Endothelial cell of umbilical vein (primary cell): ENCODE measurements at regions of chr4 and their contacts with region 1.

Region 1: DNA sequence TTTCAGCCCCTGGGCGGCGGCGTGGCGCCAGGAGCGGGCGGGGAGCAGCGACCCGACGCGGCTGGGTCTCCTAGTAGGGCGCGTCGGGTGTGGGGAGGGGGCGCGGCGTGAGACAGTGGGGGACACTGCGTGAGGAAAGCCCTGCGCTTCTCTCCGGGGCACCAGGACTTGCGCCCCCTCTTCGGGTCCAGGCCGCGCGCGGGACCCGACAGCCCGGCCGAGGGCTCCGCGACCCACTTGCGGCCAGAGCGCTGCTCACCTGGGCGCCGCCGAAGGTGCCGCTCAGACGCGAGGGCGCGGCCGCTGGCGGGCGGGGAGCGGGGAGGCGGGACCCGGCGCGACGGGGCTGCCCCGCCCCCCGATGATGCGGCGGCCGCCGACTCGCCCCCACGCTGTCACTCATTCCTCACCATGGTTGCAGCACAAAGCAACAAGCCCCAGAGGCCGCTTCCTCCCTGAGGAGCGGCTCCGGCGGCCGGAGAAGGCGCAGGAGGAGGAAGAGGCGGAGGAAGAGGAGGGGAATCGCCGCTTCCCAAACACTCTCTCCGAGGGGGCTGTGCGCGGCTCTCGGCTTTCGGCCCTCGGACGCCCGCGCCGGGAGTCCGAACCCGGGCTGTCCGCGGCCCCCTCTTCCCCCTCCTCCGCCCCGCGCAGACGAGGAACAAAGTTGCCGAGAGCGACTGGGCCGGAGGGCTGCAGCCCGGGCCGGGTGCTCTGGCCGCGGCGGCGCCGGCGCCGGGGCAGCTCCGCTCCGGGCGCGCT is at the start of gene RAPGEF2:
- DNase-seq: peak; percentile 93
- H3K4me3 ChIP-seq: peak within 1 kb of the TSS; percentile 62 to 97 (median 95)
- H3K27ac ChIP-seq: peak within 1 kb of the TSS; percentile 96
- H3K4me1 ChIP-seq: peaks cover 29% of the 10 kb centered on the region
- H3K27me3 ChIP-seq: no peaks in the 10 kb centered on the region
- CTCF ChIP-seq: no peak
- POLR2A ChIP-seq: peak; percentile 59
- total RNA-seq, gene RAPGEF2: 55.2 and 61.6 TPM in 2 replicates

Region 2: DNA sequence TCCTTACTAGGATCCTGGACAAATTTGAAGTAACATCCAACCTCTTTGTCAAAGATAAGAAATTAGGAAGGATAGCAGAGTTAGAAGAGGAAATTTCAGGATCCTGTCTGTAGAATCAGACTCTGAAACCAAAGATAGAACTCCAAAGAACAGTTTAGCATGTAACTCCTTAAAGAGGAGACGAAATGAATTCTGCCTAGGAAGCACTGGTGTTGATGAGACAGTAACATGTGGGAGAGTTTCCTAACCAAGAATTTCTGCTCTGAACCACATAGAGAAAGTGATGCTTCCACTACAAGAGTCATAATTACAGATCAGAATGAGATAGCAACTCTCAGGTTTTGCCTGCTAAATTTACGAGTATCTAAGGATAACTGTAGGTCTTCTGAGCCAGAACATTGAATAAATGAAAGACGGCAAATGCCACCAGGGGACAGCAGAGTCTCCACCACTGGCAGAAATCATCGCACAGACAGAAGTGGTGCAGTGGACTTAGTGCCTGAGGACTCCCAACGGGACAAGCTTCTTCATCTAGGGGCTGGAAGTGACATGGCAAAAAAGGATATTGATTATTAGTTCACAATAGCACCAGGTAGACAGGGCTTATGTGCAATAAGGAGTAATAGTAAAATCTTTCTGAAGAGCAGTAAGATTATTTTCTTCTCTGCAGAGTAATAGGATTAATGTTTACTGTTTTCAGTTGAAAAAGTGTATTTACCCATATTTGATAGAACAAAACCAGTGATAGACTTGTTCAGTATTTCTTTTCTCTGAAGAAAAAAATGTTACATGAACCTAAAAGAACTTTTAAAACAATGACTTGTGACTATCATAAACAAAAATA is 372.9 kb before region 1 on chr4:
- CTCF ChIA-PET with region 1: no interaction called
- POLR2A ChIA-PET with region 1: interaction called, 7 read pairs
- dilution Hi-C with region 1: no loop called
- intact Hi-C with region 1: loop called (anchors 2 kb)
- DNase-seq: peak; percentile 84
- H3K4me3 ChIP-seq: no peak overlapping the region
- H3K27ac ChIP-seq: no peak overlapping the region
- H3K4me1 ChIP-seq: no peaks in the 10 kb centered on the region
- H3K27me3 ChIP-seq: peaks cover 9 to 14% of the 10 kb centered on the region in 2 experiments
- CTCF ChIP-seq: peak; percentile 71 to 78
- POLR2A ChIP-seq: no peak

Region 3: DNA sequence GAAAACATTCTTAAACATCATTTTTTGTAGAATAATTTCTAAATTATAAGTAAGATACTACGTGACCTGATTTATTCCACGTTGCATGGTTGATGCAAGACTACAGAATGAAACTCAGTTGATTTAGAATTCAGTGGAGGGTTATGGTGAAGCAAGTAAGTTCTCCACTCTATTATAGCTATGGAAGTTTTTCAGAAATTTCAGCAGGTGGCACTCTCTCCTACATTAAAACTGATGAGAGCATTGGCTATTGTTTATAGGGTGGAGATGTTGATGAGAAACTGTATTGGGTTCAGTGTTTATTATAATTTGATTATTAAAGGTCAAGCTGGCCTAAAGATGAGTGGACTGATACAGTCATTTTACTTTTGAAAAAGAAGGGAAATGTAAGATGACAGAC is 246.0 kb before region 1 on chr4:
- CTCF ChIA-PET with region 1: interaction called, 36 read pairs
- POLR2A ChIA-PET with region 1: no interaction called
- dilution Hi-C with region 1: no loop called
- intact Hi-C with region 1: loop called (anchors 2 kb)
- DNase-seq: peak; percentile 70
- H3K4me3 ChIP-seq: no peak overlapping the region
- H3K27ac ChIP-seq: no peak overlapping the region
- H3K4me1 ChIP-seq: no peaks in the 10 kb centered on the region
- H3K27me3 ChIP-seq: no peaks in the 10 kb centered on the region
- CTCF ChIP-seq: peak; percentile 19 to 43
- POLR2A ChIP-seq: no peak

Region 4: DNA sequence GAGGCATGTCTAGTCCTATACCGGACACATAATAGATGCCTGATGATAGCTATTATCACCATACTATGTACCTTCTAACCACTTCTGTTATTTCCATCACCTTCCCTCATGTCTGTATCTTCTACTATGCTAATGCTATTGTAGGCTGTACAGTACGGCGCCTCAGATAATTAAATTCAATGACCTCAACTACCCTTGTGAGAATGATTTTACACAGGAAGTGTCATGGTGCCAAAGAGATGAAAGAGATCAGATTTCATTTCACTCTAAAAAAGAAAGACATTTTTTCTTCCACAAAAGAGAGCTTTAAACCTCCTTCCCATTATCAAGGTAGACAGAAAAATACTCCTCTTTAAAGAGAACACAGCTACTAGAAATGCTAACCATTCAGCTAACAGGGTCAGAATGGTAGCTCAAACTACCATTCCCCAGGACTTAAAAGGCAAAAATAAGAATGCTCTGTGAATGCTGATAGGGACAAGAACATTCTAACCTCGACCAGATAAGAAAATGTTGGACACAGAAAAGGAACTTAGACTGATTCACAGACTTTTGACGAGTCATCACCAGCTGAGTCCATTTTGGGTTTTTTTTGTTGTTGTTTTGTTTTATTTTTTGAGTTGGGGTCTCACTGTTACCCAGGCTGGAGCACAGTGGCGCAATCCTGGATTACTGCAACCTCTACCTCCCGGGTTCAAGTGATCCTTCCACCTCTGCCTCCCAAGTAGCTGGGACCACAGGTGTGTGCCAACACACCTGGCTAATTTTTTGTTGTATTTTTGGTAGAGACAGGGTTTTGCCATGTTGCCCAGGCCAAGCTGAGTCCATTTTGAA is 99.2 kb before region 1 on chr4:
- CTCF ChIA-PET with region 1: interaction called, 3 read pairs
- POLR2A ChIA-PET with region 1: no interaction called
- dilution Hi-C with region 1: no loop called
- intact Hi-C with region 1: loop called (anchors 2 kb)
- DNase-seq: peak; percentile 81
- H3K4me3 ChIP-seq: peak overlapping the region in 1 of 3 experiments; percentile 49
- H3K27ac ChIP-seq: peak overlapping the region; percentile 94
- H3K4me1 ChIP-seq: peaks cover 21% of the 10 kb centered on the region
- H3K27me3 ChIP-seq: no peaks in the 10 kb centered on the region
- CTCF ChIP-seq: no peak
- POLR2A ChIP-seq: no peak

Region 5: GRCh38 chr4:159159611-159160010 is 56.8 kb after region 1 on chr4:
- CTCF ChIA-PET with region 1: interaction called, 5 read pairs
- POLR2A ChIA-PET with region 1: no interaction called
- dilution Hi-C with region 1: no loop called
- intact Hi-C with region 1: loop called (anchors 1 kb)
- DNase-seq: peak; percentile 83
- H3K4me3 ChIP-seq: no peak overlapping the region
- H3K27ac ChIP-seq: peak overlapping the region; percentile 64
- H3K4me1 ChIP-seq: peaks cover 22% of the 10 kb centered on the region
- H3K27me3 ChIP-seq: no peaks in the 10 kb centered on the region
- CTCF ChIP-seq: no peak
- POLR2A ChIP-seq: no peak

Region 6: DNA sequence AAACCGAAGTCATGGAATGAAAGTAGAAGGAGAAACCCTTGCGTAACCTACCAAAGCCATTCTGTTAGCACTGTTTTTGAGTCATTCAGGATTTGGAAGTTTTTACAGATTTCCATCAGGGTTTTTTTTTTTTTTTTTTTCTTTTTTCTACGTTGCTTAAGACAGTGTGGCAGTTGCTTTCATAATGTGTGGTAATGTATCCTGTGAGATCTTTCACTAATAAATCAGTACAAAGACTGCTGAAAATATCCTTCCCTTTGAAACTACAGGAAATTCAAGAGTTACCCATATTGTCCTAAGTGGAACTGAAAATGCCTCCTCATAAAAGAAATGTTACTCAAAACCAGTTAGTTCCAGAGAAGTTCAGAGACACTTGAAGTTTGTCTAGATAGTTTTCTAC is 137.9 kb after region 1 on chr4:
- CTCF ChIA-PET with region 1: no interaction called
- POLR2A ChIA-PET with region 1: no interaction called
- dilution Hi-C with region 1: no loop called
- intact Hi-C with region 1: no loop called
- DNase-seq: no peak
- H3K4me3 ChIP-seq: no peak overlapping the region
- H3K27ac ChIP-seq: no peak overlapping the region
- H3K4me1 ChIP-seq: peaks cover 11% of the 10 kb centered on the region
- H3K27me3 ChIP-seq: no peaks in the 10 kb centered on the region
- CTCF ChIP-seq: no peak
- POLR2A ChIP-seq: no peak

Region 7: DNA sequence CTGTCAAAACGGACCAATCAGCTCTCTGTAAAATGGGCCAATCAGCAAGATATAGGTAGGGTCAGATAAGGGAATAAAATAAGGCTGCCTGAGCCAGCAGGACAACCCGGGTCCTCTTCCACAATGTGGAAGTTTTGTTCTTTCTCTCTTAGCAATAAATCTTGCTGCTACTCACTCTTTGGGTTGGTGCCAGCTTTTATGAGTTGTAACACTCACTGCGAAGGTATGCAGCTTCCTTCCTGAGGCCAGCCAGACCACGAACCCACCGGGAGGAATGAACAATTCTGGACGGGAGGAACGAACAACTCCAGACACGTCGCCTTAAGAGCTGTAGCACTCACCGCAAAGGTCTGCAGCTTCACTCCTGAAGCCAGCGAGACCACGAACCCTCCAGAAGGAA is 287.8 kb after region 1 on chr4:
- CTCF ChIA-PET with region 1: no interaction called
- POLR2A ChIA-PET with region 1: no interaction called
- dilution Hi-C with region 1: no loop called
- intact Hi-C with region 1: loop called (anchors 2 kb)
- DNase-seq: peak; percentile 94
- H3K4me3 ChIP-seq: no peak overlapping the region
- H3K27ac ChIP-seq: peak overlapping the region; percentile 93
- H3K4me1 ChIP-seq: peaks cover 13% of the 10 kb centered on the region
- H3K27me3 ChIP-seq: no peaks in the 10 kb centered on the region
- CTCF ChIP-seq: no peak
- POLR2A ChIP-seq: no peak